Dendritic cell treated with granulocyte-macrophage colony-stimulating factor and Interleukin-4, amounts not matched to agents 40 ng/mL and 50 ng/mL, for 4 days (primary cell): ENCODE measurements at regions of chr5 and their contacts with region 1.

Region 1: DNA sequence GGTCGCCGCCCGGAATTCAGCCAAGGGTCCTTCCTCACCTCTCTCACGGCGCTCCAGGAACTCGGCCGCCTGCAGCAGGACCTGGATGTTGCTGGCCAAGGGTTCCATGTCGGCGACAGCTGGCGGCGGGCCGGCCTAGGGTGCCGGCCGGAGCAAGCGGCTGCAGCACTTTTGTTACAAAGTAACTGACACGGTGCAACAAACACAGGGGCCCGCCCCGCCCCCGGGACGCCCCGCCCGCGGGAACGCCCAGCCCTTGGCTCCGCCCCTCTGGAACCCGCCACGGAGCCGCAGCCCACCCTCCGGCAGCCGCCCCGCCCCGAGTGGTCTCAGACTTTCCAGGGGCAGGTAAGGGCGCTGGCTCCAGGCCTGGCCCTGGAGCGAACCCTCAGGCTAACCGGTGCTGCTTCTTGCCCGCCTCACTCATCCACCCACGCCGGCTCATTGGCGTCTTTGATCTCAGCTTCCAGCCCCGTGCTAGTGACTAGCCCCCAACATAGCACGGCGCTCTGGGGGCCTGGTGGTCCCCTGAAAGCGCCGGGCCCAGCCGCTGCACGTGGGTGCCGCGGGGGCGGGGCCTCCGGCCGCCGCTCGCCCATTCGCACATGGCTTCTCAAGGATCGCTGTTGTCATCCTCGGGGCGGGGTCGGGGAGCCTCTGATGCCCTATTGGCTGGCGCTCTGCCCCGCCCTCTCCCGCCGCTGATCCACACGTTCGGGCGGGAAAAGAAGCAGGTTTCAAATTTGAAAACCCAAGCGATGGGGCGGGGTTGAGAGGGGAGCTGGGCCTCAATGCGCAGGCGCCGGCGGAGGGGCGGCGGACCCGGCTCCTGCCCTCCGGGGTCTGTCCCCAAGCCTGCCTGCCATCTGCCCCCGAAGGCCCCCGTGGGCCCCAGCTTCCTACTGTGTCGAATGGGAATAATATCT is at the start of gene MXD3:
- H3K4me3 Mint-ChIP-seq: peak within 1 kb of the TSS; percentile 81
- H3K27ac Mint-ChIP-seq: peak within 1 kb of the TSS; percentile 63
- H3K4me1 Mint-ChIP-seq: peaks cover 72% of the 10 kb centered on the region
- H3K27me3 Mint-ChIP-seq: peaks cover 2% of the 10 kb centered on the region

Region 2: GRCh38 chr5:176573564-176574296 is 738.3 kb before region 1 on chr5:
- intact Hi-C with region 1: no loop called
- H3K4me3 Mint-ChIP-seq: no peak overlapping the region
- H3K27ac Mint-ChIP-seq: no peak overlapping the region
- H3K4me1 Mint-ChIP-seq: peaks cover 7% of the 10 kb centered on the region
- H3K27me3 Mint-ChIP-seq: peaks cover 21% of the 10 kb centered on the region

Region 3: DNA sequence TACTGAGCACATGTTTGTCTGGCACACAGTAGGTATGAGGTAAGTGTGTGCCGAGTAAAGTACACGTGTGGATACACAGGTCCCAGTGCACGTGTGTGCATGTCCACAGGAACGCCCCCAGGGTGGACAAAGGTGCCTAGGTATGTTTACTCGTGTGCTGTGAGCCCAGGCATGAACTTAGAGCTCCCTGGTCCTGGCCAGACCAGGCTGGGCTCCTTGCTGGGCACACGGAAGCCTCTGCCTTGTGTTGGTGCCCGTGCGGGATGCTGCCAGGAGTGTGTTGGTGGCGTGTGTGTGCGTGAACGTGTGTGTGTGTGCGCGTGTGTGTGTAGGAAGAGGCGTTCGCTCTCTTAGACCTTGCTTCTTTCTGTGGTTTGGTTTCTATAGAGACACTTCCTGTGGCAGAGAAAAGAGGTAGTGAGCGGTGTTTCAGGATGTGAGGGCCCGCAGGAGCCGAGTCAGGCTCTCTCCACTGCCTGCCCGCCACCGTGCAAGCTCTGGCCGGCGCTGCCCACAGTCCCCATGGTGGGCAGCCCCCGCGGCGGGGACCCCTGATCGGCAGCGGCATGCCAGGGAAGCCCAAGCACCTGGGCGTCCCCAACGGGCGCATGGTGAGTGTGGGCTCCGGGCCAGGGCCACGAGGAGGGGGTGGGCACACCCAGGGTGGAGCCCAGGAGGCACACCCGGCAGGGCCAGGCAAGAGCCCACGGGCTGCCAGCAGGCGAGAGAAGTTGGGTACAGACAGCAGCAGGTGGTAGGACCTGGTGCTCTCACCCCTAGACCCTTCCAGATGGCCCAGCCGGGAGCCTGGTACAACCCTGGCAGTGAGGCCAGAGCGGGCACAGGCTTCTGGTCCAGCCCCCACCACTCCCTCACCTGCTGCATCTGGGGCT is 45.7 kb after region 1 on chr5 and contains the start of gene RGS14:
- intact Hi-C with region 1: loop called (anchors 5 kb)
- H3K4me3 Mint-ChIP-seq: peak within 1 kb of the TSS; percentile 94
- H3K27ac Mint-ChIP-seq: peak within 1 kb of the TSS; percentile 84
- H3K4me1 Mint-ChIP-seq: peaks cover 95% of the 10 kb centered on the region
- H3K27me3 Mint-ChIP-seq: no peaks in the 10 kb centered on the region